Activated T-helper 1 cell treated with anti-CD3 and anti-CD28 coated beads, Interleukin-12 subunit alpha, Interleukin-12 subunit beta, Interleukin-2, Interleukin-4 antibody, amounts not matched to agents 30 ng/mL and 10 ng/mL and 1 ng/mL, durations not matched to agents 14 hours and 24 hours and 36 hours (primary cell): ENCODE measurements at regions of chr20 and their contacts with region 1.

Region 1: DNA sequence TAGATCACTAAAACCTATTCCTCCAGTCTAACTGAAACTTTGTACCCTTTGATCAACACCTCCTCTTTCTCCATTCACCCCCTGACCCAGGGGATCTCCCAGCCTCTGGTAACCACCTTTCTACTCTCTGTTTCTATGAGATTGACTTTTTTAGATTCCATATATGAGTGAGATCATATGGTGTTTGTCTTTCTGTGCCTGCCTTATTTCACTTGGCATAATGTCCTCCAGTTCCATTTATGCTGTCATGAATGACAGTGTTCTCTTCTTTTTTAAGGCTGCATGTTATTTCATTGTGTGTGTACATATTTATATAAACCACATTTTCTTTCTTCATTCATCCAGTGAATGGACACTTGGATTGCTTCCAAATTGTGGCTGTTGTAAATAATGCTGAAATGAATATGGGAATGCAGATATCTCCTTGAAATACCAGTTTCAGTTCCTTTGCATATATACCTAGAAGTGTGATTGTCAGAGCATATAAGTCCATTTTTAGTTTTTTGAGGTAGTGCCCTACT is 57.7 kb downstream of the DHX35 start:
- DNase-seq: no peak
- H3K4me3 Mint-ChIP-seq: no peak overlapping the region
- H3K27ac Mint-ChIP-seq: peak overlapping the region; percentile 8
- H3K4me1 Mint-ChIP-seq: peaks cover 76% of the 10 kb centered on the region
- H3K27me3 Mint-ChIP-seq: no peaks in the 10 kb centered on the region

Region 2: DNA sequence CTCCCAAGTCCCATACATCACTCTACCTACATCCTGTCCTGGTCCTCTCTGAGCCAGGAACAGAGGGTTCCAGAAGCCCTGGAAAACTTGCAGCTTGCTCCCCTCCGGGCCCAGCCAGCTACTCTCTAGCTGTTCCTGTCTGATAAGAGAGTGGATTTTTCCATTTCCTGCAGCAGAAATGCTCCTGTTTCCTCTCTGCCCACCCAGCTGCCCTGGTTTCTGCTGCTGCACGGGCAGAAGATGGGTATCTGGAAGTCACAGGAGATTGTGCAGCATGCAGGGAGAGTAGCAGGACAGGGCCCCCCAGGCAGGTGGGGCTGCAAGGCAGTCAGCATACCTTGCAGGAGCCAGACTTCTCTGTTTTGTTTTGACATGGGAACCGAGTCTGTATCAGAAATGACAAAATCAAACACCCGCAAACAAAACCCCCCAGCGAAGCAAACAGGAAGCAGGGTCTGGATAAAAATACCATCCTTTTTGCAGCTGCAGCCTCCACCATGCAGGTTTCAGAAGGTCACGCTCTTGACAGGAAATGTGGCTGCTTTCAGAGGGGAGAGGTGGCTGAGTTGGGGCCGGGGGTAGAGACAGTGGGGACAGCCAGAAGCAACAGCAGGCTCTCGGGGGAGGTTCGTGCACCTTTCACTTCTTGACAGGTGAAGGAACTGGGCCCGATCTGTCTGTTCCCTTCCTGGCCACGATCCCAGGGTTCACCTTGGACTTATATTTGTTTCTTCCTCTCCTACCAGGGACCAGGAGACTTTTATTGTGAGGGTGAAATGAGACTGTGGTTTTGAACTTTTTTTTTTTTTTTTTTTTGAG is 144.5 kb before region 1 on chr20:
- intact Hi-C with region 1: loop called (anchors 1 kb)
- DNase-seq: peak; percentile 68
- H3K4me3 Mint-ChIP-seq: peak overlapping the region; percentile 66
- H3K27ac Mint-ChIP-seq: peak overlapping the region; percentile 96
- H3K4me1 Mint-ChIP-seq: peaks cover 95% of the 10 kb centered on the region
- H3K27me3 Mint-ChIP-seq: no peaks in the 10 kb centered on the region

Region 3: DNA sequence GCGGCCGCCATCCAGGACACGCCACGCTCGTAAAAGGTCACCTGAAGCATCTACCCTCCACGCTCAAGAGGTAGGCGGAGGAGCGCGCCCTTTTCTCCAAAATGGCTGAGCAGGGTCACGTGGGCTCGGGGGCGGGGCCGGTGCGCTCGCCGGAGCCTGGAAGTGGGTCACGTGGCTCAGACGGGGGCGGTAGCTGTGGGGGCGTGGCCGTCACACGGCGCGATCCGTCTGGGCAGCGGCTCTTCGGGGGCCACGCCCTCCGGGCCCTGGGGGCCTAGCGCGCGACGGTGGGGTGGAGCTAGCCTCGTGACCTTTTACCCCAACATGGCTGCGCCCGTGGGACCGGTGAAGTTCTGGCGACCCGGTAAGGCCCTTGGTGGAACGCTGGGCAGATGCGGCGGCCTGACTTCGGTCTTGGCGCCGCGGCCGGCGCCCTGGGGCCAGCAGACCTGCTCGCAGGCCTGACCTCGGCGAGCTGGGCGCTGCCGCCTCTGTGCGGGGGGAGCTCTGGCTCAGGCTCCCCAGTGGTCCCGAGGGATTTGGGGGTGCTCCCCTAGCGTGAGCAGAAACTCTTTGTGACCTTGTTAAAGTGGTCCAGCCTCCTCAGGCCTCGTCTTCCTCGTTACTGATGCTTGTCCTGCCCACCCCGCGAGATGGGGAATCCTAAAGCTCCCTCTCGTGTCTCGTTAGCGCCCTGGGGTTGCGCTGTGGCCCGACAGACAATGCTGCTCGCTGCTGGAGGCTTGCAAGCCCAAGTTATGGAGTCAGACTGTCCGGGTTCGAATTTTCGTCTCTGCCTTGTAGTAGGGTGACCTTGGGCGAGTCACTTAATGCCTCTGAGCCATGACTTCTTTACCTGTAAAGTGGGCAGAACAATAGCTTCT is 57.6 kb before region 1 on chr20 and contains the start of gene DHX35:
- intact Hi-C with region 1: loop called (anchors 1 kb)
- DNase-seq: peak; percentile 99
- H3K4me3 Mint-ChIP-seq: peak within 1 kb of the TSS; percentile 98
- H3K27ac Mint-ChIP-seq: peak within 1 kb of the TSS; percentile 94
- H3K4me1 Mint-ChIP-seq: peaks cover 35% of the 10 kb centered on the region
- H3K27me3 Mint-ChIP-seq: no peaks in the 10 kb centered on the region
- total RNA-seq, gene DHX35: 17.2 and 17.3 TPM in 2 replicates

Region 4: GRCh38 chr20:38997622-38998021 is 22.2 kb before region 1 on chr20:
- intact Hi-C with region 1: loop called (anchors 1 kb)
- DNase-seq: peak; percentile 15
- H3K4me3 Mint-ChIP-seq: peak overlapping the region; percentile 46
- H3K27ac Mint-ChIP-seq: peak overlapping the region; percentile 71
- H3K4me1 Mint-ChIP-seq: peaks cover 38% of the 10 kb centered on the region
- H3K27me3 Mint-ChIP-seq: no peaks in the 10 kb centered on the region

Region 5: GRCh38 chr20:39152126-39152525 is 132.3 kb after region 1 on chr20:
- intact Hi-C with region 1: no loop called
- DNase-seq: no peak
- H3K4me3 Mint-ChIP-seq: no peak overlapping the region
- H3K27ac Mint-ChIP-seq: no peak overlapping the region
- H3K4me1 Mint-ChIP-seq: no peaks in the 10 kb centered on the region
- H3K27me3 Mint-ChIP-seq: peaks cover 2% of the 10 kb centered on the region

Region 6: GRCh38 chr20:39390186-39390585 is 370.3 kb after region 1 on chr20:
- intact Hi-C with region 1: no loop called
- DNase-seq: no peak
- H3K4me3 Mint-ChIP-seq: no peak overlapping the region
- H3K27ac Mint-ChIP-seq: no peak overlapping the region
- H3K4me1 Mint-ChIP-seq: no peaks in the 10 kb centered on the region
- H3K27me3 Mint-ChIP-seq: no peaks in the 10 kb centered on the region